ENCODE measurements at regions of chr4 and their contacts with region 1.

Region 1: GRCh38 chr4:1011022-1011694 is at the start of gene FGFRL1:
- DNase-seq: peak; percentile 88
- ATAC-seq: peak; percentile 69
- H3K4me3 Mint-ChIP-seq: peak within 1 kb of the TSS; percentile 86
- H3K27ac Mint-ChIP-seq: peak within 1 kb of the TSS; percentile 55
- H3K4me1 Mint-ChIP-seq: peaks cover 15% of the 10 kb centered on the region
- H3K27me3 Mint-ChIP-seq: peaks cover 18% of the 10 kb centered on the region
- CTCF ChIP-seq: no peak
- total RNA-seq, gene FGFRL1: 4.2 and 5.6 TPM in 2 replicates

Region 2: GRCh38 chr4:637536-638280 is 373.4 kb before region 1 on chr4:
- CTCF ChIA-PET with region 1: no interaction called
- POLR2A ChIA-PET with region 1: no interaction called
- intact Hi-C with region 1: no loop called
- DNase-seq: no peak
- ATAC-seq: no peak
- H3K4me3 Mint-ChIP-seq: no peak overlapping the region
- H3K27ac Mint-ChIP-seq: no peak overlapping the region
- H3K4me1 Mint-ChIP-seq: no peaks in the 10 kb centered on the region
- H3K27me3 Mint-ChIP-seq: peaks cover 5% of the 10 kb centered on the region
- CTCF ChIP-seq: no peak

Region 3: GRCh38 chr4:742742-743311 is 268.3 kb before region 1 on chr4:
- CTCF ChIA-PET with region 1: no interaction called
- POLR2A ChIA-PET with region 1: interaction called, 3 read pairs
- intact Hi-C with region 1: loop called (anchors 5 kb)
- DNase-seq: peak; percentile 73
- ATAC-seq: peak; percentile 87
- H3K4me3 Mint-ChIP-seq: no peak overlapping the region
- H3K27ac Mint-ChIP-seq: no peak overlapping the region
- H3K4me1 Mint-ChIP-seq: peaks cover 1% of the 10 kb centered on the region
- H3K27me3 Mint-ChIP-seq: no peaks in the 10 kb centered on the region
- CTCF ChIP-seq: peak; percentile 96

Region 4: GRCh38 chr4:931960-932712 is 79.0 kb before region 1 on chr4 and contains the starts of genes GAK and TMEM175:
- CTCF ChIA-PET with region 1: no interaction called
- POLR2A ChIA-PET with region 1: interaction called, 8 read pairs
- intact Hi-C with region 1: loop called (anchors 2 kb)
- DNase-seq: peak; percentile 99
- ATAC-seq: peak; percentile 90
- H3K4me3 Mint-ChIP-seq: peak within 1 kb of the TSS; percentile 93
- H3K27ac Mint-ChIP-seq: peak within 1 kb of the TSS; percentile 92
- H3K4me1 Mint-ChIP-seq: peaks cover 78% of the 10 kb centered on the region
- H3K27me3 Mint-ChIP-seq: no peaks in the 10 kb centered on the region
- CTCF ChIP-seq: no peak
- total RNA-seq, gene GAK: 159 and 172 TPM in 2 replicates
- total RNA-seq, gene TMEM175: 24.5 and 28.8 TPM in 2 replicates

Region 5: GRCh38 chr4:1026115-1026514 is 15.0 kb after region 1 on chr4:
- CTCF ChIA-PET with region 1: no interaction called
- POLR2A ChIA-PET with region 1: interaction called, 6 read pairs
- intact Hi-C with region 1: loop called (anchors 1 kb)
- DNase-seq: peak; percentile 69
- ATAC-seq: peak; percentile 84
- H3K4me3 Mint-ChIP-seq: peak overlapping the region; percentile 24
- H3K27ac Mint-ChIP-seq: peak overlapping the region; percentile 24
- H3K4me1 Mint-ChIP-seq: peaks cover 31% of the 10 kb centered on the region
- H3K27me3 Mint-ChIP-seq: no peaks in the 10 kb centered on the region
- CTCF ChIP-seq: no peak

Region 6: GRCh38 chr4:1130316-1131186 is 119.4 kb after region 1 on chr4:
- CTCF ChIA-PET with region 1: no interaction called
- POLR2A ChIA-PET with region 1: no interaction called
- intact Hi-C with region 1: loop called (anchors 1 kb)
- DNase-seq: peak; percentile 63
- ATAC-seq: peak; percentile 99
- H3K4me3 Mint-ChIP-seq: no peak overlapping the region
- H3K27ac Mint-ChIP-seq: peak overlapping the region; percentile 19
- H3K4me1 Mint-ChIP-seq: peaks cover 21% of the 10 kb centered on the region
- H3K27me3 Mint-ChIP-seq: peaks cover 2% of the 10 kb centered on the region
- CTCF ChIP-seq: peak; percentile 99

Region 7: GRCh38 chr4:1579901-1580691 is 568.9 kb after region 1 on chr4:
- CTCF ChIA-PET with region 1: no interaction called
- POLR2A ChIA-PET with region 1: no interaction called
- intact Hi-C with region 1: loop called (anchors 5 kb)
- DNase-seq: peak; percentile 89
- ATAC-seq: peak; percentile 83
- H3K4me3 Mint-ChIP-seq: peak overlapping the region; percentile 81
- H3K27ac Mint-ChIP-seq: peak overlapping the region; percentile 79
- H3K4me1 Mint-ChIP-seq: peaks cover 4% of the 10 kb centered on the region
- H3K27me3 Mint-ChIP-seq: no peaks in the 10 kb centered on the region
- CTCF ChIP-seq: no peak

Region 8: GRCh38 chr4:1843852-1844251 is 832.7 kb after region 1 on chr4:
- CTCF ChIA-PET with region 1: no interaction called
- POLR2A ChIA-PET with region 1: no interaction called
- intact Hi-C with region 1: no loop called
- DNase-seq: no peak
- ATAC-seq: no peak
- H3K4me3 Mint-ChIP-seq: no peak overlapping the region
- H3K27ac Mint-ChIP-seq: no peak overlapping the region
- H3K4me1 Mint-ChIP-seq: no peaks in the 10 kb centered on the region
- H3K27me3 Mint-ChIP-seq: no peaks in the 10 kb centered on the region
- CTCF ChIP-seq: no peak

Region 9: GRCh38 chr4:2241410-2242353 is 1230.5 kb after region 1 on chr4 and contains the starts of genes HAUS3 and POLN:
- CTCF ChIA-PET with region 1: no interaction called
- POLR2A ChIA-PET with region 1: no interaction called
- intact Hi-C with region 1: loop called (anchors 5 kb)
- DNase-seq: peak; percentile 99
- ATAC-seq: peak; percentile 96
- H3K4me3 Mint-ChIP-seq: peak within 1 kb of the TSS; percentile 91
- H3K27ac Mint-ChIP-seq: peak within 1 kb of the TSS; percentile 86
- H3K4me1 Mint-ChIP-seq: peaks cover 54% of the 10 kb centered on the region
- H3K27me3 Mint-ChIP-seq: no peaks in the 10 kb centered on the region
- CTCF ChIP-seq: no peak
- total RNA-seq, gene HAUS3: 17.9 and 19.0 TPM in 2 replicates
- total RNA-seq, gene POLN: 1.4 and 1.7 TPM in 2 replicates

Measured in activated B cell treated with CpG ODN at 0.5 μM for 24 hours (primary cell).